ENCODE measurements at regions of chr6 and their contacts with region 1.

Region 1: GRCh38 chr6:85678602-85679444 is 36.1 kb upstream of the SYNCRIP start:
- DNase-seq: peak; percentile 97 to 99 (median 98)
- H3K4me3 ChIP-seq: peak overlapping the region; percentile 46 to 91 (median 60)
- H3K27ac ChIP-seq: peak overlapping the region; percentile 72 to 93 (median 88)
- H3K4me1 ChIP-seq: peaks cover 24 to 32% of the 10 kb centered on the region in 2 donors
- H3K27me3 ChIP-seq: no peaks in the 10 kb centered on the region
- CTCF ChIP-seq: peak in 2 of 6 experiments; percentile 8 to 37
- POLR2A ChIP-seq: peak; percentile 99 to 100

Region 2: DNA sequence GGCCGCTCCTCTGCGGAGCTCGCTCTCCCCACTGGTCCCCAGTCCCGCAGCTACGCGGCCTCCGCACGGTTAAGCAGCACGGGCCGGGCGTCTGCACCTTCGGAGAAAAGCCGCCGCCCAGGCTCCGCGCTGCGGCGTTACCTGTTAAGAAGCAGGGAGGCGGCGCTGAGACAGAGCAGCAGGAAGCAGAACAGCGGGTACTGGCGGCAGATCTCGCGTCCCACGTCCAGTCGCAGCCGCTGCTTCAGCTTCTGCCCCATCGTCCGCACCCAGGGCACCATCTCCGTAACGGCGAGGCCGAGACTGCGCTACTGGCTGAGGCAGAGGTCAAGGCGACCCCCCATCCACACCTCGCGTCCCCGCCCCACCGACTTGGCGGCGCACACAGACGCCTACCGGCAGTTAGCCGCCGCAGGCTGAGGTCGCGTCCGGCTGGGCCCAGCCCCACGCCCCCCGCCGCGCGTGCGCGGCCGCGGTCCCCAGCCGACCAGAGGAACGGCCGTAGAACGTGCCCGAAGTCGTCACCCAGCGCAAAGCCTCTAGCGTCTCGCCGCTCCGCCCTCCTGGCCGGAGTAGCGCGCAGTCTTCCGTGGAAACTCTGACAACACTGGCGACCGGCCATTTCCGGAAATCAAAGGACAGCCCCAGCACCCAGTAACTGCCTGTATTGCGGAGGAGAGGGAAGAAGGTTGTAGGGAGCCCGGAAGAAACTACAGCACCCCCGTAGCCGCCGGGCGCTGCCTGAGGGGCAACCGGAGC is 85.2 kb before region 1 on chr6 and contains the start of gene SNX14:
- intact Hi-C with region 1: loop called in 1 of 2 experiments (anchors 10 kb)
- DNase-seq: peak; percentile 95 to 98 (median 97)
- H3K4me3 ChIP-seq: peak within 1 kb of the TSS; percentile 36 to 85 (median 76)
- H3K27ac ChIP-seq: peak within 1 kb of the TSS; percentile 73 to 98 (median 95)
- H3K4me1 ChIP-seq: peaks cover 13 to 16% of the 10 kb centered on the region in 2 donors
- H3K27me3 ChIP-seq: no peaks in the 10 kb centered on the region
- CTCF ChIP-seq: peak in 2 of 6 experiments; percentile 32 to 34
- POLR2A ChIP-seq: peak; percentile 84 to 93
- total RNA-seq, gene SNX14: 60.0 to 141 (median 83.4) TPM

Region 3: GRCh38 chr6:85642774-85643536 is 35.9 kb before region 1 on chr6 and contains the start of gene SYNCRIP:
- intact Hi-C with region 1: loop called (anchors 2 to 5 kb)
- DNase-seq: peak; percentile 99
- H3K4me3 ChIP-seq: peak within 1 kb of the TSS; percentile 63 to 99 (median 90)
- H3K27ac ChIP-seq: peak within 1 kb of the TSS; percentile 96 to 100 (median 99)
- H3K4me1 ChIP-seq: peaks cover 14 to 35% of the 10 kb centered on the region in 2 donors
- H3K27me3 ChIP-seq: no peaks in the 10 kb centered on the region
- CTCF ChIP-seq: no peak
- POLR2A ChIP-seq: peak; percentile 96 to 99
- total RNA-seq, gene SYNCRIP: 28.2 to 103 (median 60.0) TPM